Heart right ventricle (tissue), 16 donors: ENCODE measurements at regions of chr1 and their contacts with region 1.

Region 1: DNA sequence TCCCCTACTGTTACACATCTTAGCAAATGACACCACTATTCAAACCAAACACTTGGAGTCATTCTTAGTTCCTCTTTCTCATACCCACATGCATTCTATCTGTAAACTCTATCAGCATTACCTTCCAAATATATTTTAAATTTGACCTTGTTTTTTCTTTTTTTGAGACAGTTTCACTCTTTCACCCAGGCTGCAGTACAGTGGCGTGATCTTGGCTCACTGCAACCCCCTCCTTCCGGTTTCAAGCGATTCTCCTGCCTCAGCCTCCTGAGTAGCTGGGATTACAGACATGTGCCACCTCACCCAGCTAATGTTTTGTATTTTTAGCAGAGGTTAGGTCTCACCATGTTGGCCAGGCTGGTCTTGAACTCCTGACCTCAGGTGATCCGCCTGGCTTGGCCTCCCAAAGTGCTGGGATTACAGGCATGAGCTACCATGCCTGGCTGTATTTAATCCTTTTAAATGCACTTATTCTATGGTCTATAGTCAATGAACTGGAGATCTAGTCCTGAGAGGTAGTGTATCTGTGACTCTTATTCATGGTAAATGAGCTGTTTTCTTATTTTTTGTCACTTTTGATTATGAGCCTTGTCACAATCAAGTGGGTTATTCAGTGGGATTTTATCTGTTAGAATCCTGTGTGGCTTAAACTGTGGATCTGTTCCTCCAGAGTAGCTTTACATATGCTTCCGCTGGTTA is 73.1 kb downstream of the GATAD2B start:
- DNase-seq: no peak
- ATAC-seq: no peak
- H3K4me3 ChIP-seq: no peak overlapping the region
- H3K27ac ChIP-seq: no peak overlapping the region
- H3K4me1 ChIP-seq: peaks cover 0 to 23% (median 0%) of the 10 kb centered on the region in 9 donors
- H3K27me3 ChIP-seq: no peaks in the 10 kb centered on the region
- CTCF ChIP-seq: no peak

Region 2: GRCh38 chr1:153646672-153647374 is 202.8 kb before region 1 on chr1:
- intact Hi-C with region 1: no loop called
- DNase-seq: no peak
- ATAC-seq: peak in 7 of 8 donors; percentile 3 to 30 (median 15)
- H3K4me3 ChIP-seq: no peak overlapping the region
- H3K27ac ChIP-seq: peak overlapping the region in 3 of 10 donors; percentile 19 to 30 (median 24)
- H3K4me1 ChIP-seq: peaks cover 2 to 62% (median 33%) of the 10 kb centered on the region in 9 donors
- H3K27me3 ChIP-seq: no peaks in the 10 kb centered on the region
- CTCF ChIP-seq: no peak

Region 3: DNA sequence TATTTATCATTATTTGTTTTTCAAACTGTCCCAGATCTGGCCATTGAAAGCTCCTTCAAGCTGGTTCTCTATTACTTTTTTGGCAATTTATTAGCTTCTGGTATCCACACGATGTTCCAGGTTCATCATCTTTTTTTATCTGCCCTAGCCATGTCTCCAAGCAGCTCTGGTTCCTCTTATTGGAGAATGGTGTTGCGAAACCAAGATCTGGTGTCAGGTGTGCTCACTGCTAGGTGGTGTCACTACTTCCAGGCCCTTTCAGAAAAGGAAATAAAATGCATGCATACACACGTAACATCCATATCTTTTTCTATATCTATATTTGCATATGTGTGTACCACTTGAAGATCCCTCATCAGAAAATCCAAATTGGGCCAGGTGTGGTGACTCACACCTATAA is 19.8 kb after region 1 on chr1:
- intact Hi-C with region 1: loop called in 1 of 10 experiments (anchors 2 kb)
- DNase-seq: no peak
- ATAC-seq: no peak
- H3K4me3 ChIP-seq: no peak overlapping the region
- H3K27ac ChIP-seq: no peak overlapping the region
- H3K4me1 ChIP-seq: peaks cover 0 to 32% (median 13%) of the 10 kb centered on the region in 9 donors
- H3K27me3 ChIP-seq: no peaks in the 10 kb centered on the region
- CTCF ChIP-seq: no peak

Region 4: DNA sequence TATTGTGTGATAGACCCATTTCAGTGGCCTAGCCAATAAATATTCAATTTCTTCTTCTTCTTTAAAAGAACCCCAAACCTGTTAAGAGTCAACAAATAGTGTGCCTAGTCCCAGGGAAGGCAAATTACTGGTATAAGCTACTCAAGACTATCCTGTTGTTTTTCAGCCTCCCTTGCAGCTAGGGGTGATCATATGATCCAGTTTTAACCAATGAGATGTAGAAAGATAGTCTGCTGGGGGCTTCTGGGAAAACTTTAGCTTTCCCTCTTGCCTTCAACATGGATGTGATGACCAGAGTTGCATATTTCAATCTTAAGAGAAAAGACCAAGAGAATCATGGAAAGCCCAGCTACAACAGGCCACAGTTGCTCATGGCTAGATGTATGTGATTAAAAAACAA is 309.9 kb after region 1 on chr1:
- intact Hi-C with region 1: no loop called
- DNase-seq: no peak
- ATAC-seq: no peak
- H3K4me3 ChIP-seq: no peak overlapping the region
- H3K27ac ChIP-seq: peak overlapping the region in 2 of 10 donors; percentile 80 to 81
- H3K4me1 ChIP-seq: peaks cover 0 to 62% (median 20%) of the 10 kb centered on the region in 9 donors
- H3K27me3 ChIP-seq: no peaks in the 10 kb centered on the region
- CTCF ChIP-seq: no peak